Psoas muscle (tissue), 8 donors: ENCODE measurements at regions of chr12 and their contacts with region 1.

Region 1: GRCh38 chr12:120265473-120266179 is at the start of gene PXN:
- DNase-seq: peak; percentile 93 to 95
- ATAC-seq: peak; percentile 84 to 93 (median 90)
- H3K4me3 ChIP-seq: peak within 1 kb of the TSS; percentile 94
- H3K27ac ChIP-seq: peak within 1 kb of the TSS; percentile 95
- H3K4me1 ChIP-seq: peaks cover 38% of the 10 kb centered on the region
- H3K27me3 ChIP-seq: no peaks in the 10 kb centered on the region
- CTCF ChIP-seq: peak; percentile 95
- total RNA-seq, gene PXN: 67.6 to 166 (median 106) TPM

Region 2: GRCh38 chr12:119565404-119565803 is 700.2 kb before region 1 on chr12:
- intact Hi-C with region 1: no loop called
- DNase-seq: no peak
- ATAC-seq: no peak
- H3K4me3 ChIP-seq: no peak overlapping the region
- H3K27ac ChIP-seq: no peak overlapping the region
- H3K4me1 ChIP-seq: no peaks in the 10 kb centered on the region
- H3K27me3 ChIP-seq: no peaks in the 10 kb centered on the region
- CTCF ChIP-seq: no peak

Region 3: DNA sequence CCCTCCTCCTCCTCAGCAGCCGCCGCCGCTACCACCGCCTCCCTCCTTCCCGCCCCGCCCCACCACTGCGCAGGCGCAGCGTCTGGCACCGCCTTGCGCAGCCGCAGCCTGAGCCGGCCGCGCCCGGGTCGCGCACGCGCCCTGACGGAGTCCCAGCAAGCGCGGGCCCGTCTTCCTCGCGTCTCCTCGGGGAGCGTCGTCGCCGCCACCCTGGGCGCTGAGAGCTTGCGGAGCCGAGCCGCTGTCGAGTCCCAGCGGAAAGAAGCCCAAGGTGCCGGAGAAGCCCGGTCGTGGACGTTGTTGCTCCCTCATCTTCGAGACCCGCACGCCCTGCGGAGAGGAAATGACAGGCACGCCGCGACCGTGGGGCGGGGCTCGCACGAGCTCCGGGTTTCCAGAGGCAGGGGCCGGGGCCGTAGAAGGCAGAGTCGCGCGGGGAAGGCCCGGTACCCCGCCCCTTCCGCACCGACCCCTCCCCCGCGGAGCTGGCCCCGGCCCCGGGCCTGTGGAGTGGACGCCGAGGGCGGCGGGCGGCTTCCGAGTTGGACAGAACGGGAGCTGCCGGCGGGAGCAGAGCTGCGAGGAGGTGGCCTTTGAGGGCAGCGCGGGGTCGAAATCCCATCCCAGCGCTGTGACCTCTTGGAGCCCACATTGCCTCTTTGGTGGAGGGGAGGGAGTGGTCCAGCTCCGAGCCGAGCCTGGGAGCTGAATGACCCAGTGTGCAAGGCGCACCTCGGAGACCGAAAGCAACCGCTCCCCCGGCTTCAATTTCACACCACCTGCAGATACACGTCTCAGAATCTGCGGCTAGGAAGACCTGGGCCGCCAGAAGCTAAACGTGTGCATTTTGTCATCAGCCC is 148.6 kb before region 1 on chr12:
- intact Hi-C with region 1: loop called in 1 of 2 experiments (anchors 10 kb)
- DNase-seq: peak; percentile 94 to 98
- ATAC-seq: peak; percentile 90 to 96 (median 93)
- H3K4me3 ChIP-seq: peak overlapping the region; percentile 77
- H3K27ac ChIP-seq: peak overlapping the region; percentile 87
- H3K4me1 ChIP-seq: peaks cover 31% of the 10 kb centered on the region
- H3K27me3 ChIP-seq: no peaks in the 10 kb centered on the region
- CTCF ChIP-seq: no peak

Region 4: DNA sequence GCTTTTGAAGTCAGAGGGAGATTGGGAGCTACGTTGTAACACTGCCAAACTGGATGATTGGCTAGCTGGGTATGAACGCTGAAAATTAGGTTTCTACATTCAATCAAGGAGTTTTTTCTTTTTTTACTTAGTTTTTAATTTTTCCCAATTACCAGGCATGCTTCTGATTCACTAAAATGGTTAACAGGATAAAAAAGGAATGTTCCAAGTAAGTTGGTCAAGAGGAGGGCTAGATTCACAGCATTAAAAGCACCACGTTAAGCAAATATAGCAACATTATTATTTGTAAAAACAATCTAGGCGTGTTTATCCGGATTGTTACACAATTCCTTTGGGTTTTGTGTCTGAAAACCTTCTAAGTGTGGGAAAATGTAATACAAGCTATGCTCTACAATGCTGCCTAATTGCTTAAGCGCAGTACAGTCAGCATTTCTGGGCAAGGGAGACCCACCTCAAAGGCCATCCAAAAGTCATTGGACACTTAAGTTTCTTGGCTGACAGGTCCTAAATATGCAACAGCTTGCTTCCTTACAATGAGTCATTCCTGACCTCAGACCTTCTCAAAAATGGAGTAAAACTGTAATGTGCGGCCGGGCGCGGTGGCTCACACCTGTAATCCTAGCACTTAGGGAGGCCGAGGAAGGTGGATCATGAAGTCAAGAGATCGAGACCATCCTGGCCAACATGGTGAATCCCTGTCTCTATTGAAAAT is 65.9 kb before region 1 on chr12:
- intact Hi-C with region 1: loop called in 1 of 2 experiments (anchors 1 kb)
- DNase-seq: peak; percentile 59 to 79
- ATAC-seq: peak; percentile 61 to 74 (median 68)
- H3K4me3 ChIP-seq: peak overlapping the region; percentile 82
- H3K27ac ChIP-seq: peak overlapping the region; percentile 92
- H3K4me1 ChIP-seq: peaks cover 46% of the 10 kb centered on the region
- H3K27me3 ChIP-seq: no peaks in the 10 kb centered on the region
- CTCF ChIP-seq: no peak

Region 5: GRCh38 chr12:120216742-120217605 is 48.7 kb before region 1 on chr12:
- intact Hi-C with region 1: no loop called
- DNase-seq: no peak
- ATAC-seq: no peak
- H3K4me3 ChIP-seq: no peak overlapping the region
- H3K27ac ChIP-seq: no peak overlapping the region
- H3K4me1 ChIP-seq: no peaks in the 10 kb centered on the region
- H3K27me3 ChIP-seq: no peaks in the 10 kb centered on the region
- CTCF ChIP-seq: no peak

Region 6: DNA sequence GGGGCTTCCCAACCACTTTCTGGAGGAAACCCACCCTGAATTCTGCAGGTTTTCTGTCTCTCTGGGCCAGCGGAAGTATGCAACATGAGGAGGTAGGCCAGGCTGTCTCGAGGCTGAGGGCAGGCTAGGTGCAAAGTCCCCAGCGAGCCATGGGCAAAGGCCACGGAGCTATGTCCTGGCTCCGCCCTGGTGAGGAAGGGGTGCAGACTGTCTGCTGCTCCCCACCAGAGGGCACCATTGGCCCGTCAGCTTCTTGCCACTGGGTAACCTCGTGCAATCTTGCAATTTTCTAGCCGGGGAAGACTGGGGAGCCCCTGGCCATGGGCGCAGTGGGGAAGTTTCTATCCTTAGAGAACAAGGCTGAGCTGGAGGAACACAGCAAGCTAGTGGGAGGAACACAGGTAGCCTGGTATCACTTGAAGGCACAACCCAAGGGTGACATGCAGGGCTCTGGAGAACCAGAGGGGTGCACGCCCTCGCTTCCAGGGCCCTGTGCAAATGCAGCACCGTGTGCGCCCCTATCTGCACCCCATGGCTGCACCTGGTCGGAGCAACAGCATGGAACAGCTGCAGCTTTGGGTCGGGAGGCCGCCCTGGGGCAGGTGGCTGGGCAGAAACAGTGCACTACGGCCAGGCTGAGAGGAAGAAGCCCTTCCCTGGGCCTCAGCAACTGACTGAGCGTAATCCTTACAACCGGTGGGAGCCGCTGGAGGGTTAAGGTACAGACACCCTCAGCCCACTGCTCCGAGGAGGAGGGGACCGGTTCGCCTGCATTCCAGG is 37.1 kb before region 1 on chr12:
- intact Hi-C with region 1: loop called (anchors 1 to 2 kb)
- DNase-seq: peak; percentile 89 to 95
- ATAC-seq: peak; percentile 54 to 67 (median 62)
- H3K4me3 ChIP-seq: peak overlapping the region; percentile 52
- H3K27ac ChIP-seq: peak overlapping the region; percentile 99
- H3K4me1 ChIP-seq: peaks cover 83% of the 10 kb centered on the region
- H3K27me3 ChIP-seq: no peaks in the 10 kb centered on the region
- CTCF ChIP-seq: peak; percentile 93

Region 7: DNA sequence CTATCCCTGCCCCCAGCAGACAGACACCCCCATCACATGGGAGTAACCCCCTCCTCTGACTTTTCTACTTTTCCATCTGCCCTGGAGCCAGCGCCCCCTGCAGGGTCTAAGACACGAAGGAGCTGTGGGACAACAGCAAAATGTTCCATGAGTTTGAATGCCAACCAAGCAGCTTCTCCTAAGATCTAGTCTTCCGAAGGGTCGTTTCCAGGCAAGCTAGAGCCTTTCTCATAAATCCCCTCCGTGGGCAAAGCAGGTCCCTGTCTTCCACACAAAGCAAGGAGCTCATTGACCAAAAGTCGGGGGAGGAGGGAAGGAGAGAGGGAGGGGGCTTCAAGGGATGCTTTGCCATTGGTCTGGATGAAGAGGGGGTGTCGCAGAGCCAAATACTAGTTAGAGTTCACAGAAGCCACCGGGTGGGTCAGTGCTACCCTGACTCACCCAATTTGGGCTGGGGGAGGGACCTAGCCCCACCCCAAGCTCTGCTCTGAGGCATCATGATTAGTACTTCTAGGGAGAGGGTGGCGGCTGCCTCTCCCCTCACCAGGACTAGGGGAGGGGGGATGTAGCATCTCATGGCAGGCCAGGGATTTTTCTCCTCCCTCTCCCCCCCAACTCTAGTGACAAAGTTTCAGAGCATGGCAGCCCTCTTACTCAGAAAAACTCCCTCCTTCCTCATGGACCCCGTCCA is 101.8 kb after region 1 on chr12:
- intact Hi-C with region 1: no loop called
- DNase-seq: no peak
- ATAC-seq: no peak
- H3K4me3 ChIP-seq: no peak overlapping the region
- H3K27ac ChIP-seq: no peak overlapping the region
- H3K4me1 ChIP-seq: no peaks in the 10 kb centered on the region
- H3K27me3 ChIP-seq: peaks cover 0 to 65% (median 20%) of the 10 kb centered on the region in 3 donors
- CTCF ChIP-seq: no peak

Region 8: DNA sequence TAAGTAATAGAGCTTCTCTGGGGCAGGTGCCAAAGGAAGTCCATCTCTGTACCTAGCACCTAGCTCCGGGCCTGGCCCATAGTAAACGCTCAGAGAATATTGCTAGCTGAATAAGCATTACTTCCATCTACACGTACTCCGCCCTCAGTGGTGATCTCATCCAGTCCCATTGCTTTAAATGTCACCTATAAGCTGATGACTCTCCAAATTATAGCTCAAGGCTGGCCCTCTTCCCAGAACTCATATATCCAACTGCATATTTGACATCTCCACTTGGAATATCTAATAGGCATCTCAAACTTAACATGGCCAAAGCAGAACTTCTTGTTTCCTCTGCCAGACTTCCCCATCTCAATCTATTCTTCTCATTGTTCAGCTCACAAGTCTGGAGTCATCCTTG is 223.4 kb after region 1 on chr12:
- intact Hi-C with region 1: no loop called
- DNase-seq: no peak
- ATAC-seq: no peak
- H3K4me3 ChIP-seq: no peak overlapping the region
- H3K27ac ChIP-seq: no peak overlapping the region
- H3K4me1 ChIP-seq: peaks cover 6% of the 10 kb centered on the region
- H3K27me3 ChIP-seq: no peaks in the 10 kb centered on the region
- CTCF ChIP-seq: no peak